Astrocyte of the cerebellum (primary cell): ENCODE measurements at regions of chr18 and their contacts with region 1.

Region 1: GRCh38 chr18:67337696-67338095 is 178.8 kb downstream of the DSEL start:
- DNase-seq: no peak
- H3K4me3 ChIP-seq: no peak overlapping the region
- CTCF ChIP-seq: no peak

Region 2: GRCh38 chr18:67379981-67380380 is 42.3 kb after region 1 on chr18:
- in situ Hi-C with region 1: loop called (anchors 5 kb)
- DNase-seq: no peak
- H3K4me3 ChIP-seq: no peak overlapping the region
- CTCF ChIP-seq: no peak